ENCODE measurements at regions of chr1 and their contacts with region 1.

Region 1: GRCh38 chr1:247390116-247390791 is 25.7 kb upstream of the NLRP3 start:
- DNase-seq: peak; percentile 66
- H3K4me3 ChIP-seq: no peak overlapping the region
- H3K27ac ChIP-seq: no peak overlapping the region
- H3K4me1 ChIP-seq: no peaks in the 10 kb centered on the region
- H3K27me3 ChIP-seq: no peaks in the 10 kb centered on the region
- CTCF ChIP-seq: peak; percentile 51 to 76 (median 73)
- POLR2A ChIP-seq: no peak

Region 2: DNA sequence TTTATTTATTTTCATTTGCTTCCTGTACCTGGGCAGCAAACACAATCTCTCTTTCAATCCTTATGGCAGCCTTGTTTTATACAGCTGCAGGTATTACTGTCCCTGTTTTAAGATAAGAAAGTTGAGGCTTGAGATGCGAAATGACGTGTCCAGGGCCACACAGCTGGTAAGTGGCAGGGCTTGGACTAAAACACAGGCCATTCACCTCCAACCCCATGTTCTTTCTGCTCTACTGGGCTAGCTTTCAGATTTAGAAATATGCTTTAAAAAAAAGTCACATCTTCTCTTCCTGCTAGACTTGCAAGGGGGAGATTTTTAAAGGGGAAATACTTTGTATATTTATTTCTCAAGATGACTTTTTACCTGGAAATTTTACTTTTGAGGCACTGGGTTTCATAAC is 761.2 kb before region 1 on chr1:
- intact Hi-C with region 1: no loop called
- DNase-seq: no peak
- H3K4me3 ChIP-seq: no peak overlapping the region
- H3K27ac ChIP-seq: no peak overlapping the region
- H3K4me1 ChIP-seq: no peaks in the 10 kb centered on the region
- H3K27me3 ChIP-seq: no peaks in the 10 kb centered on the region
- CTCF ChIP-seq: no peak
- POLR2A ChIP-seq: no peak

Region 3: DNA sequence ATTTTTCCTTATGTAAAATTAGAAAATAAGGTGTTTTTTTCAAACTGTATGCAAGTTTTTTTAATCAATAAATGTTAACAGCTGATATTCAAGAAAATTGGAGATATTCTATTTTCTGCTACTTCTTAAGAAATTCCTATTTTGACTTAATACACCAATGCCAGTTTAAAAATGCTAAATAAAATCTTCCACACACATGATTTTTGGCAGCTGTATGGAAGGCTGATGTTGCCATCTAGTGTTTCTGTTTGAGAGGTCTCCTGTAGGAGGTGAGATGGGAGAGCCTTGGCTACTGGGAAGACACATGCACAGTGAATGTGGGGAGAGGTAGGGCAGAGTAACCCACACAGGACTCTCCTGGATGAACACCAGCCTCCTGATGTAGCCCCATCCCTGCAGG is 96.8 kb after region 1 on chr1:
- intact Hi-C with region 1: loop called (anchors 5 kb)
- DNase-seq: peak; percentile 13
- H3K4me3 ChIP-seq: no peak overlapping the region
- H3K27ac ChIP-seq: no peak overlapping the region
- H3K4me1 ChIP-seq: no peaks in the 10 kb centered on the region
- H3K27me3 ChIP-seq: no peaks in the 10 kb centered on the region
- CTCF ChIP-seq: peak in 3 of 4 experiments; percentile 18 to 50 (median 39)
- POLR2A ChIP-seq: no peak

Measured in prostate gland (tissue), 2 donors.